Heart left ventricle (tissue), 16 donors: ENCODE measurements at regions of chr18 and their contacts with region 1.

Region 1: DNA sequence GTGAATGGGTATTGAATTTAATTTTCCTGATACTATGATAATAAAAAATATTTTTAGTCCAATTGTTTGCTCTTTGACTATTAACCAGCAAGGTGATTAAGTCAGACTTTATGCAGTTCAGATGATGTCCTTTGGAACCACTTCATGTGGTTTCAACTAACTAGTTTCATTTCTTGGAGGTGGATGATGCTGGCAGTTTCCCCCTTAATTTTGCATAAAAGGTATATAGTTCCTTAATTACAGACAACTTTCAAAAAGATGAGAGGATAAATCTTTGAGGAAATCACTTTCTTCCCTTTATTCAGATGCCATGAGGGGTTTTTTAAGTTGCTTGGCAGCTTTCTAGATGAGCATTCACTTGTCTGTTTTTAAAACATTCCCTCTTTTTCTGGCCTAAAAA is 223.1 kb downstream of the PHLPP1 start:
- DNase-seq: no peak
- ATAC-seq: no peak
- H3K4me3 ChIP-seq: no peak overlapping the region
- H3K27ac ChIP-seq: peak overlapping the region in 8 of 12 donors; percentile 17 to 83 (median 53)
- H3K4me1 ChIP-seq: peaks cover 0 to 36% (median 14%) of the 10 kb centered on the region in 12 donors
- H3K27me3 ChIP-seq: no peaks in the 10 kb centered on the region
- CTCF ChIP-seq: no peak
- POLR2A ChIP-seq: no peak

Region 2: DNA sequence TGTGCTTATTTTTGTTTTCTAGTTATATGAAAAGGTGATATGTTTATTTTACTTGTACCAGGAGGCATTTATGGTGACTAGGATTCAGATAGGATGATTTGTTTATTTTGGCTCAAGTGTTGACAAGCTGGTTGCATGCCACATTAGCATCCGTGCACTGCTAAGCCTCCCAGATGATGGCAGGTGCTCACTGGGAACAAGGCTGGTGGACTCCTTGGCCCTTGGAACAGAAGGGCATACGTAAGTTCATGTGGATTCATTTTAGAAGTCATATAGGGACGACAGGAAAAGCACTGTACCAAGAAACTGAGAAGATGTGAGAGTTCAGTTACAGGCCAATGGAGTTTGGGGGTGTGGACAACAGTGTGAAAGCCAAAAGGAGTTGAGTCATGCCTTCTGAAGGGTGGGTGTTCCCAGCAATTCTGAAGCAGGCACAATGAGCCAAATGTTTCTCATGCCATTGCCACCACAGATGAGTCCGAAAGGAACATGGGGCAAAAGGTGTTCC is 56.9 kb before region 1 on chr18:
- intact Hi-C with region 1: loop called in 1 of 10 experiments (anchors 10 kb)
- DNase-seq: no peak
- ATAC-seq: peak in 3 of 4 donors; percentile 54 to 90 (median 76)
- H3K4me3 ChIP-seq: no peak overlapping the region
- H3K27ac ChIP-seq: no peak overlapping the region
- H3K4me1 ChIP-seq: peaks cover 7 to 42% (median 23%) of the 10 kb centered on the region in 12 donors
- H3K27me3 ChIP-seq: no peaks in the 10 kb centered on the region
- CTCF ChIP-seq: no peak
- POLR2A ChIP-seq: no peak

Region 3: GRCh38 chr18:62904396-62905285 is 33.8 kb before region 1 on chr18:
- intact Hi-C with region 1: loop called in 1 of 10 experiments (anchors 5 kb)
- DNase-seq: no peak
- ATAC-seq: no peak
- H3K4me3 ChIP-seq: no peak overlapping the region
- H3K27ac ChIP-seq: no peak overlapping the region
- H3K4me1 ChIP-seq: peaks cover 0 to 6% (median 0%) of the 10 kb centered on the region in 12 donors
- H3K27me3 ChIP-seq: no peaks in the 10 kb centered on the region
- CTCF ChIP-seq: no peak
- POLR2A ChIP-seq: no peak

Region 4: DNA sequence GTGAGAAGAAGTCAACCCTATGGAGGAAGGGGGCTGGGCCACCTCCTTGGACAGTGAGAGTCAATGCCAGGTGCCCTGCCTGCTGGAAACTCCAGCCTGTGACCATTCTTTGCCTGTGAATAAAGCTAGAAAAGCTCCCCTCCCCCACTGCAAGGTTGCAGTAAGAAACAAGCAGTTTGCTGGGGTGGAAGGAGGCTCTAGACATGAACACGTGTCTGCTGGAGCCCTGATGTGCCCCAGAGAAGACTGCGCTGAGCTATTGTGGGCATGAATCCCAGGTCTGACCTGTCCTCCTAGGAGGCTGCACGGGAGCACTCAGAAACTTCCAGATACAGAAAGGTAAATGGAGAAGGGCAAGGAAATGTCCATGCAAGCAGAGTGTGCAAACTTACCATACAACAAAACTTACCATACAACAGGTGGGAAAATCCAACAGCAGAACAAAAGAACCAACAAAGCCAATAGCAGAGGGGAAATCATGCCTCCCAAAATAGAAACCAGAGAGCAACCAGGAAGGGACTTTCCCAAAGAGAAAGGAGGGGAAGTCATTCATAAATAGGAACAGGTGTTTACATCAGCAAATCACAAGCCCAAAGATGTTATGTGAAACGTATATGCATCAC is 102.4 kb after region 1 on chr18:
- intact Hi-C with region 1: no loop called
- DNase-seq: no peak
- ATAC-seq: no peak
- H3K4me3 ChIP-seq: no peak overlapping the region
- H3K27ac ChIP-seq: no peak overlapping the region
- H3K4me1 ChIP-seq: peaks cover 0 to 8% (median 0%) of the 10 kb centered on the region in 12 donors
- H3K27me3 ChIP-seq: peaks cover 0 to 1% (median 0%) of the 10 kb centered on the region in 9 donors
- CTCF ChIP-seq: no peak
- POLR2A ChIP-seq: no peak